Psoas muscle (tissue), 8 donors: ENCODE measurements at regions of chr12 and their contacts with region 1.

Region 1: DNA sequence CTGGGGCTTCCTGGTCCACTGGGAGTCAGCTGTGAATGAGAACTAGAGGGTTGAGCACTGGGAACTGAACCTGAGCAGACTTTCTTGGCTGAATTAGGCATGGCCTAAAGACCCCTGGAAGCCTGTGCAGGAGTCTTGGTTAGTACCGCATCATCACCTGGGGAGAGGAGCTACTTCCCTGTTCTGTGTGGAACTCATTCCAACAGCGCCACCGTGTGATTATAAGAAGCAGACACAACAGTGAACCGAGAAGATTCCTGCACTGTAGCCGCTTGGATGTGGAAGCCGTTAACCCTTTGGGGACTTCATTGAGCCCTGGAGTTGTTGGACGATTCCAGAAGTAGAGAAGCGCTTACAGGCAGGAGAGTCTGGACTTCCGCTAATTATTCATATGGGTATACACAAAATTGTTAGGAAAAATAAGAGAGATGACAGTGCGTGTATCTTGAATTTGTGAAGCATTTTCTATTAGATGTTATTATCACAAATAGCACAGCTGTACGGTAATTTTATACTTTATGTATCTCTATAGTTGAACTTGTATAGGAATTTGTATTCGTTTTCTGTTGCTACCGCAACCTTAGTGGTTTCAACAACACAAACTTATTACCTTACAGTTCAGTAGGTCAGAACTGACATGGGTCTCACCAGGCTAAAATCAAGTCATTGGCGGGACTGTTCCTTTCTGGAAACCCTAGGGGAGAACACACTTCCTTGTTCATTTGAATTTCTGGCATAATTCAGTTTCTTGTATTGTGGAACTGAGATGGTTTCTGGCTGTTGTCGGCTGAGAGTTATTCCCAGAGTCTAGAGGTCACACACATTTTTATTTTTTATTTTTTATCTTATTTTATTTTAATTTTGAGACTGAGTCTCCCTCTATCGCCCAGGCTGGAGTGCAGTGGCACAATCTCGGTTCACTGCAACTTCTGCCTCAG is 100.7 kb downstream of the C2CD5 start:
- DNase-seq: peak; percentile 18 to 49
- ATAC-seq: peak; percentile 78 to 94 (median 92)
- H3K4me3 ChIP-seq: no peak overlapping the region
- H3K27ac ChIP-seq: no peak overlapping the region
- H3K4me1 ChIP-seq: no peaks in the 10 kb centered on the region
- H3K27me3 ChIP-seq: no peaks in the 10 kb centered on the region
- CTCF ChIP-seq: peak; percentile 71

Region 2: GRCh38 chr12:22100958-22101748 is 342.5 kb before region 1 on chr12:
- intact Hi-C with region 1: loop called in 1 of 2 experiments (anchors 5 kb)
- DNase-seq: no peak
- ATAC-seq: peak in 2 of 4 donors; percentile 53 to 56
- H3K4me3 ChIP-seq: no peak overlapping the region
- H3K27ac ChIP-seq: no peak overlapping the region
- H3K4me1 ChIP-seq: no peaks in the 10 kb centered on the region
- H3K27me3 ChIP-seq: no peaks in the 10 kb centered on the region
- CTCF ChIP-seq: peak; percentile 23